ENCODE measurements at regions of chr20 and their contacts with region 1.

Region 1: DNA sequence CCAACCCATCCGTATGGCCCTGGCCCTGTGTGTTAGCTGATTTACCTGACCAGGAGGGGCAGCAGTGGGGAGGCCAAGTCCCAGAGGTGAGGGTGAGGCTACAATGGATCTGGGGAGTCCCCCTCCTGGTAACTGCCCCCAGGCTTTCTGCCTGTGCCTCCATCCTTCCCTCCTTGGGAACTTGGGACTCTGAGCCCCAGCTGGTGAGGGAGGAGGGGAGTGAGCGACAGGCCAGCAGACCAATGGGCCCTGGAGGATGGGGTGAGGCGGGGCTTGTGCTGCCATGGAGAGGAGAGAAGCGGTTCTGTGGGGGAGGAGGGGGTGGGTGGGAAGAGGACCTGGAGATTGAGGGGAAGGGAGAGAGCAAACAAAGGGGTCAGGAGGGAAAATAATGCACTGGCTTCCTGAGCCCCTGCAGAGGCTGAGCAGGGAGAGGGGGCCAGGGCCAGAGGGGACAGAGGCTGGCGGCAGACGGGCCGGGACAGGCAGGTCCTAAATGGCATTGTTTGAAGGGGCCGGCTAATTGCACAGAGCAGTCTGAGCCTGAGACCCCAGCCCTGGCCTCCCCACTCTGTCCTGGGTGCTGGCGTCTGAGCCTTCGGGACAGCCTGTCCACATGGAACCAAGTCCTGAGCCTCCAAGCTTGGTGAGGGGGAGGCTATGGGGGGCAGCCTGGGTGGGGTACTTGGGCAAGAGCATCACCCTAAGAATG is 17.5 kb downstream of the DNMT3B start:
- DNase-seq: no peak
- ATAC-seq: no peak
- H3K4me3 ChIP-seq: no peak overlapping the region
- H3K4me3 Mint-ChIP-seq: no peak overlapping the region
- H3K27ac ChIP-seq: no peak overlapping the region
- H3K27ac Mint-ChIP-seq: no peak overlapping the region
- H3K4me1 ChIP-seq: peaks cover 3 to 4% of the 10 kb centered on the region in 2 experiments
- H3K4me1 Mint-ChIP-seq: peaks cover 8 to 14% (median 9%) of the 10 kb centered on the region in 3 donors
- H3K27me3 ChIP-seq: no peaks in the 10 kb centered on the region
- H3K27me3 Mint-ChIP-seq: no peaks in the 10 kb centered on the region

Region 2: DNA sequence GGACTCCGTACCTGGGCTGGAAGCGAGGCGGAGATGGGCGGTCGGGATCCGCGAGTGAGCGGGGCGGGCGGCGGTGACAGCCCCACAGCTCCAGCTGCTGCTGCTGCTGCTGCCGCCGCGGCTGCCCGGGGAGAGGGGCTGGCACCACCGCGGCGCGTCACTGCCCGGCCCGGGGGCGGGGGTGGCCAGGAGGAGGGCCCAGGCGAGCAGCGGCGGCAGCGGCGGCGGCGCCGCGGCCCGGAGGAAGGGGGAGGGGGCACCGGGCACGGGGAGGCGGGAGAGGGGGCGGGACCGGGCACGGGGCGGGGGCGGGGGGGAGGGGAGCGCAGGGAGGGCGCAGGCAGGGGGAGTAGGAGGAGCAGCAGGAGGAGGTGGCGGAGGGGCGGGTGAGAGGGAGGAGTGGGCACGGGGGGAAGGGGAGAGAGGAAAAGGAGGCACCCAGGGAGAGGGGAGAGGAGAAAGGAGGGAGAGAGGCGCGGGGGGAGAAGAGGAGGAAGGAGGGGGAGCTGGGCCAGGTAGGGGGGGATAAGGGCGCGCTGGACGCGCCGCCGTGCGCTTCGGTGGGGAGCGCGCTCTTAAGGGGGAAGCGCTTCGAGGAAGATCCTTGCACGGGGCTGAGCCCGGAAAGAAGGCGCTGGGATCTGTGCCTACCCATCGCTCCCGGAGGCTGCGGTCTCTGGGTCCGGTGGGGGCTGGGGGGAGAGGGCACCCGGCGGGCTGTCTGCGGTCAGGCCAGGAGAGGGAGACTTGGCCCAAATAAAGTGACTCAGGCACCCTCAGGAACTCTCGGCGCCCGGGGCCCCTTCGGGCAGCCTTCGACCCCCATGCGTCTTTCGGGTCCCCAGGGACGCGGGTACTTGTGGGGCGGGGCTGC is 296.1 kb before region 1 on chr20:
- CTCF ChIA-PET with region 1: no interaction called
- POLR2A ChIA-PET with region 1: interaction called in 1 of 2 experiments, 11 read pairs
- DNase-seq: peak in 33 of 35 experiments; percentile 20 to 78 (median 57)
- ATAC-seq: peak; percentile 32 to 43 (median 37)
- H3K4me3 ChIP-seq: peak overlapping the region; percentile 73 to 77
- H3K4me3 Mint-ChIP-seq: peak overlapping the region; percentile 79 to 85 (median 80)
- H3K27ac ChIP-seq: peak overlapping the region; percentile 41
- H3K27ac Mint-ChIP-seq: peak overlapping the region; percentile 31 to 61
- H3K4me1 ChIP-seq: peaks cover 23 to 62% of the 10 kb centered on the region in 2 experiments
- H3K4me1 Mint-ChIP-seq: peaks cover 54 to 63% (median 56%) of the 10 kb centered on the region in 3 donors
- H3K27me3 ChIP-seq: no peaks in the 10 kb centered on the region
- H3K27me3 Mint-ChIP-seq: no peaks in the 10 kb centered on the region

Region 3: GRCh38 chr20:32674362-32674789 is 105.3 kb before region 1 on chr20:
- CTCF ChIA-PET with region 1: interaction called, 46 to 87 read pairs
- POLR2A ChIA-PET with region 1: interaction called in 1 of 2 experiments, 3 read pairs
- DNase-seq: peak; percentile 39 to 81 (median 66)
- ATAC-seq: peak; percentile 48 to 80 (median 58)
- H3K4me3 ChIP-seq: no peak overlapping the region
- H3K4me3 Mint-ChIP-seq: no peak overlapping the region
- H3K27ac ChIP-seq: no peak overlapping the region
- H3K27ac Mint-ChIP-seq: peak overlapping the region in 1 of 2 donors; percentile 3
- H3K4me1 ChIP-seq: peaks cover 14 to 24% of the 10 kb centered on the region in 2 experiments
- H3K4me1 Mint-ChIP-seq: peaks cover 17 to 25% (median 23%) of the 10 kb centered on the region in 3 donors
- H3K27me3 ChIP-seq: peaks cover 0 to 8% of the 10 kb centered on the region in 2 experiments
- H3K27me3 Mint-ChIP-seq: no peaks in the 10 kb centered on the region

Region 4: DNA sequence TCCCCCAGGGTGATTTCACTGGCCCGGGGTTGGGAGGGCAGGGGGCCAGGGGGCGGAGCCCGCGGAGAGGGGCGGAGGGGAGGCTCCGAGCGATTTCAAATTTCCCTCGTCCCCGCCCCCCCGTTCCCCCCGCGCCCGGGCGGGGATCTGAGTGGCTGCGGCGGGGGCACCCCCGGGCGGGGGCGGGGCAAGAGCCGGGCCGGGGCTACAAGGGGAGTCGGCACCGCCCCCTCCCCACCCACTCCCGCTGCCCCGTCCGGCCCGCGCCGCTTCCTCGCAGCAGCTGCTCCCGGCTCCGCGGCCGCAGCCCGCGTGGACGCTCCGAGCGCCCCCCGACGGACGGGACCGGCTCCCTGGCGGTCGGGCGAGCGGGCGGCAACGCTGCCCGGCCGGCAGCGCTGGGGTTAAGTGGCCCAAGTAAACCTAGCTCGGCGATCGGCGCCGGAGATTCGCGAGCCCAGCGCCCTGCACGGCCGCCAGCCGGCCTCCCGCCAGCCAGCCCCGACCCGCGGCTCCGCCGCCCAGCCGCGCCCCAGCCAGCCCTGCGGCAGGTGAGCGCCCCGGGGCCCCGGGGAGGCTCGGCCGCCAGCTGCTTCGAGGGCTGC is 17.4 kb before region 1 on chr20 and contains the start of gene DNMT3B:
- CTCF ChIA-PET with region 1: interaction called in 1 of 2 experiments, 11 read pairs
- POLR2A ChIA-PET with region 1: no interaction called
- DNase-seq: peak; percentile 29 to 76 (median 58)
- ATAC-seq: peak; percentile 83 to 88 (median 84)
- H3K4me3 ChIP-seq: peak within 1 kb of the TSS; percentile 56 to 61
- H3K4me3 Mint-ChIP-seq: peak within 1 kb of the TSS; percentile 79 to 88 (median 84)
- H3K27ac ChIP-seq: no peak within 1 kb of the TSS
- H3K27ac Mint-ChIP-seq: peak within 1 kb of the TSS in 1 of 2 donors; percentile 44
- H3K4me1 ChIP-seq: peaks cover 0 to 20% of the 10 kb centered on the region in 2 experiments
- H3K4me1 Mint-ChIP-seq: peaks cover 10 to 13% (median 12%) of the 10 kb centered on the region in 3 donors
- H3K27me3 ChIP-seq: peaks cover 0 to 10% of the 10 kb centered on the region in 2 experiments
- H3K27me3 Mint-ChIP-seq: no peaks in the 10 kb centered on the region
- total RNA-seq, gene DNMT3B: 0.56 to 1.7 (median 0.95) TPM

Region 5: DNA sequence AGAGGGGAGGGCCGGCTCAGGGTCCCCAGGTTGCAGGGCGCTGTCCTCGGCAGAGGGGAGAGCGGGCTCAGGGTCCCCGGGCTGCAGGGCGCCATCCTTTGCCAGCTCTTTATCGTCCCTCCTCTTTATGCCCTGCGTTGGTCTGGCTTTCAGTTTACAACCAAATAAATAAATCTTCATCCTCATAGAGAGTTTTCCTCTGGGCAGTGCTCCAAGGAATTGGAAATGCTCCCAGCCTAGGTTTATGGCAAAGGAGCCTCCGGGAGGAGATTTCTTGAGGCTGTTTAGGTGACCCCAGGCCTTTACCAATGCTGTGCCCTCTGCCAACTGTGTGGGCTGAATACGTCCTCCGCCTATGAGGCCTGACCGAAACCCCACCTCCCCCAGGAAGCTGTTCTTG is 1091.7 kb after region 1 on chr20:
- CTCF ChIA-PET with region 1: no interaction called
- POLR2A ChIA-PET with region 1: no interaction called
- DNase-seq: no peak
- ATAC-seq: no peak
- H3K4me3 ChIP-seq: no peak overlapping the region
- H3K4me3 Mint-ChIP-seq: no peak overlapping the region
- H3K27ac ChIP-seq: no peak overlapping the region
- H3K27ac Mint-ChIP-seq: no peak overlapping the region
- H3K4me1 ChIP-seq: no peaks in the 10 kb centered on the region
- H3K4me1 Mint-ChIP-seq: no peaks in the 10 kb centered on the region
- H3K27me3 ChIP-seq: peaks cover 0 to 4% of the 10 kb centered on the region in 2 experiments
- H3K27me3 Mint-ChIP-seq: no peaks in the 10 kb centered on the region

Region 6: GRCh38 chr20:34089655-34090345 is 1310.1 kb after region 1 on chr20:
- CTCF ChIA-PET with region 1: no interaction called
- POLR2A ChIA-PET with region 1: interaction called in 1 of 2 experiments, 12 read pairs
- DNase-seq: no peak
- ATAC-seq: no peak
- H3K4me3 ChIP-seq: no peak overlapping the region
- H3K4me3 Mint-ChIP-seq: no peak overlapping the region
- H3K27ac ChIP-seq: no peak overlapping the region
- H3K27ac Mint-ChIP-seq: peak overlapping the region; percentile 7 to 31
- H3K4me1 ChIP-seq: no peaks in the 10 kb centered on the region
- H3K4me1 Mint-ChIP-seq: peaks cover 5 to 17% (median 14%) of the 10 kb centered on the region in 3 donors
- H3K27me3 ChIP-seq: no peaks in the 10 kb centered on the region
- H3K27me3 Mint-ChIP-seq: no peaks in the 10 kb centered on the region

Measured in T-cell (primary cell).